ENCODE measurements at regions of chr17 and their contacts with region 1.

Region 1: GRCh38 chr17:43760254-43760852 is 1.8 kb upstream of the SOST start:
- DNase-seq: peak; percentile 91
- H3K4me3 ChIP-seq: no peak overlapping the region
- H3K27ac ChIP-seq: no peak overlapping the region
- H3K4me1 ChIP-seq: peaks cover 4% of the 10 kb centered on the region; the same call in 1 of the 2 replicates
- H3K27me3 ChIP-seq: 0 out of 2 replicates have a peak, but pooled peaks cover 13% of the 10 kb centered on the region

Region 2: DNA sequence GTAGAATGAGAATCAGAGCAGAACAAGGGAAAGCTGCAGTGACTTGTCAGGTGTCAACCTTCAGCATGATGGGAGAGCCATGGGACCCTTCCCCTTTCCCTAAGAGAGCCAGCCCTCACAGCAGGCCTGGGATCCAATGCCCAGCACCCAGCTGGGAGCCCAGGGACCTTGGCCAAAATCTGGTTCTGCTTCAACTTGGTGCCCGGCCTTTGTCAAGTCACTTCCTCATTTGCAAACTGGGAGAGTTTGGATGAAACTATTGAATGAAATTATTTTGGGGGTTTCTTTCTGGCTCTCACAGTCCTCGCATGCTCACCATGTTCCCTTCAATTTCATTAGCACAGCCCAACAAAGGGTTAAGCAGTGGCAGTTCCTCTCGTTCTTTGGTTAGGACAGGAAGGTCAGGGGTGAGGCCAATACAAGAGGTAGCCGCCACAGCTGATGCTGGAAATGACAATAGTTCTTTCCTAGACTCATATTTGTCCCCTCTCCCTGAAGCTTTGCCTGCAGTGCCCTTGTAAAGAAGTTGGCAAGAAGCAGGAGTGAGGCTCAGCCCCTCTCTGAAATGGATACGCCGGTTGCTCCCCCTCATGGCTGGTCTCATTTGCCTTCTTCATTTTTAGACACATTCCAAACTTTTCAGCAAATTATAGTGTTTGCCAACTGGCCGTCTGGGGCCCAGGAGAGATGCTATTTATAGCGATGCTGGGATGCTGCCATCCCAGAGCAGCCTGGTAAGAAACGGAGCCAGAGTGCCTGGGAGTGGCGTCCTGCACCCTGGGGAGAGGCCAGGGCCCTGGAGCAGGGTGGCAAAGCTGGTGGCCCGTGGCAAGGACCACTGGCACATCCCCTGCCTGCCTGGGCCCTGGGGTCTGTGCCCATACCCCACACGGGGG is 64.1 kb before region 1 on chr17:
- in situ Hi-C with region 1: loop called (anchors 5 kb)
- DNase-seq: peak; percentile 77
- H3K4me3 ChIP-seq: no peak overlapping the region
- H3K27ac ChIP-seq: no peak overlapping the region
- H3K4me1 ChIP-seq: peaks cover 15% of the 10 kb centered on the region
- H3K27me3 ChIP-seq: no peaks in the 10 kb centered on the region

Region 3: DNA sequence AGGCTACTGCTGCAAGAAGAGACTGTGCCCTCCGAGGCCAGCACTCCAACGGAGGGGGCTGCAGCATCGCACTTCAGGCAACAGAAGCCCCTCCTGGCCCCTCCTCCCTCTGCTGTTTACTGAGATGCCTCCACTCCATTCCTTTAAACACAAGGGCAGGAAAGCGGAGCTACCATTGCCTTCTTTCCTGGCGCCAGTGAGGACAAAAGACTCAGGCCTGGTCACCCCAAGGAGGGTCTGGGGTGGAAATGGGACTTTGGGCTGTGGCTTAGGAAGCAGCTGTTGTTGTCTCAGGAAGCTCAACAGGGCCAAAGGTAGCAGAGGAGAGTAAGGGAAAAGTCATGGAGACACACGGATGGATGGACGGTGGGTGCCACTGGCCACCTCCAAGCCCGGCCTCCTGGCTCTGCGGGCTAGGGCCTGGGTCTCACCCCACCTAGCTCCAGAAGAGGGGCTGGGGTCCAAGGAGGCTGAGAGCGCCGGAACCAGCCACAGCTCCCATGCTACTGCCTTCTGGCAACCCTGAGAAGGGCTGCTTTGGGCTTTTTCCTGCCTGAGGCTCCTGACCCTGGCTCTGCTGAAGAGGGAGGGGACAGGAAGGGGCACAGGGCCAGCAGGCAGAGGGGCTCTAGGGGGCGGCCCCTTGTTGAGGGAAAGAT is 97.7 kb after region 1 on chr17:
- in situ Hi-C with region 1: no loop called
- DNase-seq: no peak
- H3K4me3 ChIP-seq: no peak overlapping the region
- H3K27ac ChIP-seq: no peak overlapping the region
- H3K4me1 ChIP-seq: no peaks in the 10 kb centered on the region
- H3K27me3 ChIP-seq: peaks cover 50% of the 10 kb centered on the region

Measured in GM23248 (cell line).